ENCODE measurements at regions of chr4 and their contacts with region 1.

Region 1: GRCh38 chr4:89657931-89658700 is 178.8 kb downstream of the SNCA start:
- DNase-seq: peak; percentile 1
- H3K4me3 ChIP-seq: no peak overlapping the region
- H3K27ac ChIP-seq: no peak overlapping the region
- H3K27me3 ChIP-seq: no peaks in the 10 kb centered on the region
- CTCF ChIP-seq: peak; percentile 60

Region 2: DNA sequence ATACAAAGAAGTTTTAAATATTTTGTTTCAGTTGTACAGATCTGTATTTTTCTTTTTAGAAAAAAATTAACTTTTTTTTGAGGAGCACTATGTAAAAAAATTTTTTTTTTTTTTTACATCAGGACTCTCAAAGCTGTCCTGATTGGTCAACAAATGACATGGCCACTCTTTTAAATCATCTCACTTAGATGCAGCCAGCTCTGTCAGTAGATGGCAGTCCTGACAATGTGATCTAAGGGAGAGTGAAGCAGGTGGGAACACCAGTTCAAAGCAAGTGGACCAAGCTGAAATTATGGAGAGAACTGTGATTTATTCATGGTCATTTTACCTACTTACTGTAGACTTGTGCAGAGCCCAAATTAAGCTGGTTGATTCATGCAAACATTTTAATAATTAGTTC is 175.9 kb before region 1 on chr4:
- CTCF ChIA-PET with region 1: interaction called, 22 read pairs
- POLR2A ChIA-PET with region 1: no interaction called
- DNase-seq: no peak
- H3K4me3 ChIP-seq: no peak overlapping the region
- H3K27ac ChIP-seq: no peak overlapping the region
- H3K27me3 ChIP-seq: no peaks in the 10 kb centered on the region
- CTCF ChIP-seq: peak; percentile 36

Region 3: DNA sequence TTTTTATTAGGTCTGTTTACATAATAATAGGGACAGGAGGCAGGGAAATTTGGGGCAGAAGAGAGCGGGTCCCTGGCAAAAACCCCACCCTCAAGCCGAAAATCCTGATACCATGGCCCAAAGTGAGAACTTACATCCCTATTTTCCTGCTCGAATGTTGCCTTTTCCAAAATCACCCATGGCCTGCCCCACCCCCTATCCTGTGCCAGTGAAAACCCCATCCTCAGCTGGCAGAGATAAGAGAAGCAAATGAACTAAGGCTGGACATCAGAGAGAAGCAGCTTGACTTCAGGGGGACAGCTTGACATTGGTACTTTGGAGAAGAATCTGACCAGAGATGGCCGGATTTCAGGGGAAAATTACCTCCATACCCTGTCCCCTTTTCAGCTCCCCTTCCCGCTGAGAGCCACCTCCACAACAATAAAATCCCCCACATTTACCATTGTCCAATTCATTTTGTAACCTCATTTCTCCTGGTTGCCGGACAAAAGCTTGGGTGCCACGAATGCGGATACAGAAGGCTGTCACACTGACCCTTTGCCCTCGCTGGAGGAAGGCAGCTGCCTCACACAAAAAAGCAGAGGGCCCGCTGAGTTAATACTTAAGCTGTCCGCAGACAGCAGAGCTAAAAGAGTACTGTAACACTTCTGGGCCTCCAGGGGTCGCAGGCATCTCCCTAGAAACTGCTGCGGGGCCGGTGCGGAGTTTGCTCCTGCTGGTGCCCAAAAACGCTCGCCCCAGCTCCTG is 17.3 kb before region 1 on chr4:
- CTCF ChIA-PET with region 1: interaction called, 35 read pairs
- POLR2A ChIA-PET with region 1: no interaction called
- DNase-seq: peak; percentile 23
- H3K4me3 ChIP-seq: peak overlapping the region; percentile 41
- H3K27ac ChIP-seq: no peak overlapping the region
- H3K27me3 ChIP-seq: no peaks in the 10 kb centered on the region
- CTCF ChIP-seq: peak; percentile 83

Region 4: DNA sequence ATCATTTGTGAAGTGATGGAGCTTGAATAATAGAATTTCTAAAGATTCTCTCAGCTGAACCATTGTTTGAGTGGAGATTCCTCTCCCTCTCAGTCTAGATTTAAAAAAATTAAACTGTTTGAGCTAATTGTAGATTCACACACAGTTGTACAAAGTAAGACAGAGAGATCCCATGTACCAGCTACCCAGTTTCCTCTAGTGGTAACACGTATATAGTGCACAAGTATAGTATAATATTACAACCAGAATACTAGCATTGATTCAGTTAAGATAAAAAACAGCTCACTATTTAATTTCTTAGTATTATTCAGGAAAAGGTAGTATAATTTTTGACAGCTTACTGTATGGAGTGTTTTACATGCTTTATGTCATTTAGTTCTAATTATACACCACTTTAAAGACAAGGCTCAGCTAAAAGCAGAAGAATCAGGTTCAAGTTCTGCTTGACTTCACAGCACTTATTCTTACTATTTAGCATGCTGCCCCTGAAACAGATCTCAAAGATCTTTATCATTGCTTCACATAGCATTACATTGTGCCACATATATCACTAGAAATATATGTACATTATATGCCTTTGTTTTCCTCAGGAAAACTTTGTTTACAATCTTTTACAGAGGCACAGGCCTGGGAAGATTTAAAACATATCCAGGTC is 42.8 kb after region 1 on chr4:
- CTCF ChIA-PET with region 1: interaction called, 13 read pairs
- POLR2A ChIA-PET with region 1: no interaction called
- DNase-seq: no peak
- H3K4me3 ChIP-seq: no peak overlapping the region
- H3K27ac ChIP-seq: no peak overlapping the region
- H3K27me3 ChIP-seq: no peaks in the 10 kb centered on the region
- CTCF ChIP-seq: no peak

Region 5: GRCh38 chr4:89868999-89869589 is 211.0 kb after region 1 on chr4:
- CTCF ChIA-PET with region 1: interaction called, 102 read pairs
- POLR2A ChIA-PET with region 1: no interaction called
- DNase-seq: no peak
- H3K4me3 ChIP-seq: no peak overlapping the region
- H3K27ac ChIP-seq: no peak overlapping the region
- H3K27me3 ChIP-seq: no peaks in the 10 kb centered on the region
- CTCF ChIP-seq: peak; percentile 55

Region 6: GRCh38 chr4:89894649-89895550 is 236.8 kb after region 1 on chr4 and contains the start of gene MMRN1:
- CTCF ChIA-PET with region 1: interaction called, 14 read pairs
- POLR2A ChIA-PET with region 1: no interaction called
- DNase-seq: no peak
- H3K4me3 ChIP-seq: no peak within 1 kb of the TSS
- H3K27ac ChIP-seq: no peak within 1 kb of the TSS
- H3K27me3 ChIP-seq: no peaks in the 10 kb centered on the region
- CTCF ChIP-seq: no peak
- polyA plus RNA-seq, gene MMRN1: not detected in 2 replicates

Region 7: DNA sequence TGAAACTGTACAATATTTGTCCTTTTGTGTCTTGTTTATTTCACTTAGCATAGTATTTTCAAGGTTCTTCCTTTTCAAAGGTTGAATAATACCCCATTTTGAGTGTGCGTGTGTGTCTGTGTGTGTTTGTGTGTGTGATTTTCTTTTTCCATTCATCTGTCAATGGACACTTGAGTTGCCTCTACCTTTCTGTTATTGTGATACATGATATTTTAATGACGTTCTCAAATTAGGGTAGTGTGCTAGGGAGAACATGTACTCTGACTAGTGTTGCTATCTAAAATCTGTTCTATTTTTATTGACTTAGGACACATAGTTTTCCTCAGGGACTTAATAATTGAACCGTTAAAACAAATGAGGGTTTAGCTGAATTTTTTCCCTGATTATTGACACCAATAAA is 246.4 kb after region 1 on chr4:
- CTCF ChIA-PET with region 1: interaction called, 22 read pairs
- POLR2A ChIA-PET with region 1: no interaction called
- DNase-seq: no peak
- H3K4me3 ChIP-seq: no peak overlapping the region
- H3K27ac ChIP-seq: no peak overlapping the region
- H3K27me3 ChIP-seq: no peaks in the 10 kb centered on the region
- CTCF ChIP-seq: no peak